ENCODE measurements at regions of chr11 and their contacts with region 1.

Region 1: DNA sequence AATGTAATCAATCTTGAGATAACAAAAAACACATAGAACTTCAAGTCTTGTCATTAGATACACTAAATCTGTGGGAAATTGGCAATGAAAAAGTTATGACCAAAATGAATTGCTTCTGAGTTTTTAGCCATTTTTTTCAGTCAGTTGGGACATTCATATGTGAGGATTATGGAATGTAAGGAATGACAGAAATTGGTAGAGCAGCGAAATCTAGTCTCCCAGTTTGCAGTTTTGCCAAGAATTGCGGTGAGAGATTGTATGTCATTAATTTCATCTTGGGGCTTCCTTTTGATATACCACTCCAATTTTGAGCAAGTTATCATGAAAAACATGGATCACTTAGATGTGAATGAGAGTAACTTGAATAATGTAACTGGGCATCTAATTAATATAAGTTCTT is 49.9 kb downstream of the SIK2 start:
- DNase-seq: no peak
- ATAC-seq: no peak
- H3K4me3 ChIP-seq: no peak overlapping the region
- H3K27ac ChIP-seq: no peak overlapping the region
- H3K4me1 ChIP-seq: no peaks in the 10 kb centered on the region
- H3K27me3 ChIP-seq: no peaks in the 10 kb centered on the region
- CTCF ChIP-seq: no peak
- EP300 ChIP-seq: no peak
- POLR2A ChIP-seq: no peak
- RAD21 ChIP-seq: no peak

Region 2: DNA sequence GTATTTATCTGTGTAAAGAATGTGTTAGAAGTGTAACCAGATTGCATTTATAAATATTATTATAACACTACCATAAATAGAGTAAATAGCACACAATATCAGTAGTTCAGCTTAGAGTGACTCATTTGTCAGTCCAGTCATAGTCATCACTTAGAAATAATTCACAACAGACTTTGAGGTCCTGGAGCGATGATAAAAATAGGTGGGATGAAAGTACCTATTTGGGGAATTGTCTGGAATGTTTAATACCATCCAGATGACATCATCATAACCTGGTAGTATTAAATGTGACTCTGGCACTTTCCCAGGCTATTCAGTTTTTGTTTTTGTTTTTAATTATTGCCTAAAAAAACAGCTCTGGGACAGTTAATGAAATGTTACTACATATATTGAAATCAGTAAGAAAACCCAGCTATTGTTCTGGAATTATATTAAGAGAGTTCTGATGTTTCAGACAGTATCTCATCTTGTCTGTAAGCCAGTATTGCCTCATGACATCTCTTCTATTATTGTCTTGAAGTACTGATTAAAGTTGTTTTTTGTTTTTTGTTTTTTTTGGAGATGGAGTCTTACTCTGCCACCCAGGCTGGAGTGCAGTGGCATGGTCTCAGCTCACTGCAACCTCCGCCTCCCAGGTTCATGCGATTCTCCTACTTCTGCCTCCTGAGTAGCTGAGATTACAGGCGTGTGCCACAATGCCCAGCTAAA is 24.8 kb after region 1 on chr11:
- CTCF ChIA-PET with region 1: no interaction called
- POLR2A ChIA-PET with region 1: no interaction called
- RAD21 ChIA-PET with region 1: no interaction called
- SMC1A ChIA-PET with region 1: interaction called, 15 read pairs
- in situ Hi-C with region 1: no loop called
- intact Hi-C with region 1: no loop called
- DNase-seq: no peak
- ATAC-seq: no peak
- H3K4me3 ChIP-seq: no peak overlapping the region
- H3K27ac ChIP-seq: no peak overlapping the region
- H3K4me1 ChIP-seq: no peaks in the 10 kb centered on the region
- H3K27me3 ChIP-seq: no peaks in the 10 kb centered on the region
- CTCF ChIP-seq: no peak
- EP300 ChIP-seq: no peak
- POLR2A ChIP-seq: no peak
- RAD21 ChIP-seq: no peak

Measured in GM12878 (cell line).